ENCODE measurements at regions of chr20 and their contacts with region 1.

Region 1: DNA sequence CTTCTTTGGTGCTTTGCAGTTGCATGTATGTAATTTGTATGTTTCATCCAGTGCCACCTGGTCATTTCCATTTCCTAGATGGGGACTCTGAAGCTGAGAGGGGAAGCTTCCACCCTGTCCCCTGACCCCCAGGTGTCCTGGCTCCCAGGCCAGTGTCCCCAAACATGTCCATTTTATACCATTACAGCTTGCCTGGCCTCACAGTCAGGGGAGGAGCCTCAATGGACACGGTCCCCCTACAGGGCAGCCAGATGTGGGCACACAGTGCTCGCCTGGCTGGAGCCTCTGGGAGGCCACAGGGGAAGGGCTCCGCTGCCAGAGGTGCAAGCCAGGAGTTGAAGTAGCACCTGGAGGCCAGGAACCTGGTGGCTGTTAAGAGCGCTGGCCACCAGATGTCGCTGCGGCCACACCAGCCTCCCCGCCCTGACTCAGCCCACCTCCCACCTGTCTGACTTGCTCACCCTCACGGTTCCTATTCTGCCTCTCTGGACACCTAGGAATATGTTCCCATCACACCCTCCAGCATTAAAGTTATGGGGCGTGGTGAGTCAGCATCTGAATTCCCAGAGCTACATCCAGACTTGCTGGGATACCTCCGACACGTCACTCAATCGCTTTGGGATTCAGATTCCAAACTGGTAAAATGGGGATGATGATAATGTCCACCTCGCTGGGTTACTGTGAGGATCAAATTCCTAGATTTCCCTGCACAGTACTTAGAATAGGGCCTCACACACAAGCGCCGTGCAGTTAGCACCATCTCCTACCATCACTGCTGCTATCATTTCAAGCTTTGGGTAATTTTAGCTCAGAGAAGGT is 107.4 kb downstream of the SULF2 start:
- DNase-seq: peak; percentile 85
- CTCF ChIP-seq: peak; percentile 91

Region 2: GRCh38 chr20:47642624-47643023 is 35.2 kb before region 1 on chr20:
- CTCF ChIA-PET with region 1: no interaction called
- POLR2A ChIA-PET with region 1: no interaction called
- DNase-seq: no peak
- CTCF ChIP-seq: no peak

Region 3: GRCh38 chr20:47663333-47664067 is 14.3 kb before region 1 on chr20:
- CTCF ChIA-PET with region 1: interaction called, 37 read pairs
- POLR2A ChIA-PET with region 1: no interaction called
- DNase-seq: peak; percentile 84
- CTCF ChIP-seq: peak; percentile 97

Region 4: DNA sequence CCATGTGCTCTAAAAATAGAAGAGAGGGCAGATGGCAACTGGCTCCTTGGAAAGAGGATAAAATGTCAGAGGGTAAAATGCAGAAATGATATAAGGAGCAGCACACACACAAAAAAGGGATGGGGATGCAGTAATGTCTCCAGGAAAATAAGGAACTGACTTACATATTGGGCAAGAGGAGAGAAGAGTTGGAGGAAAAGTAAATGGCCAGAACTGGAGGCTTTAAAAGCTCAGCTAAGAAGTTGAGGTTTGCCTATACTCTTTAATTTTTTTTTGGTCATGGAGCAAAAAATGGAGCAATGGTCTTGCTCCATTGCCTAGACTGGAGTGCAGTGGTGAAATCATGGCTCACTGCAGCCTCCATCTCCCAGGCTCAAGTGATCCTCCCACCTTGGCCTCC is 13.8 kb after region 1 on chr20:
- CTCF ChIA-PET with region 1: interaction called, 53 read pairs
- POLR2A ChIA-PET with region 1: no interaction called
- DNase-seq: no peak
- CTCF ChIP-seq: no peak

Region 5: DNA sequence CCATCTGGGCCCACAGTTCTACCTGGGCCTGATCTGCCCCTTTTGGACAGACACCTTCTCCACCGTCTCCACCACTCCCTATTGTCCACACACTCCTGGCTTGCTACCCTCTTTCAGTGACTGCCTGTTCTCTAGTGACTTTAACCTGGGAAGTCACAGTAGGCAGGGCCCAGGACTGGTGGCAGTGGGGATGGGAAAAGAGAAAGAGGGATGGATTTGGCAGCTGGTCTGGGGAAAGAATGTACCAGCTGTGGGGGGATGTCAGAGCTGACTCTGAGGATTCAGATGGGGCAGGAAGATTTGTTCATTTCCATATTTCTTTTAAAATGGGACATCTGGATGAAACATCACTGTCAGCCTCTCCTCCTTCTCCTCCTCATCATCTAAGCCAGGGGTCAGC is 22.0 kb after region 1 on chr20:
- CTCF ChIA-PET with region 1: interaction called, 53 read pairs
- POLR2A ChIA-PET with region 1: no interaction called
- DNase-seq: no peak
- CTCF ChIP-seq: no peak

Region 6: GRCh38 chr20:47713878-47714450 is 36.1 kb after region 1 on chr20:
- CTCF ChIA-PET with region 1: interaction called, 70 read pairs
- POLR2A ChIA-PET with region 1: no interaction called
- DNase-seq: no peak
- CTCF ChIP-seq: no peak

Region 7: DNA sequence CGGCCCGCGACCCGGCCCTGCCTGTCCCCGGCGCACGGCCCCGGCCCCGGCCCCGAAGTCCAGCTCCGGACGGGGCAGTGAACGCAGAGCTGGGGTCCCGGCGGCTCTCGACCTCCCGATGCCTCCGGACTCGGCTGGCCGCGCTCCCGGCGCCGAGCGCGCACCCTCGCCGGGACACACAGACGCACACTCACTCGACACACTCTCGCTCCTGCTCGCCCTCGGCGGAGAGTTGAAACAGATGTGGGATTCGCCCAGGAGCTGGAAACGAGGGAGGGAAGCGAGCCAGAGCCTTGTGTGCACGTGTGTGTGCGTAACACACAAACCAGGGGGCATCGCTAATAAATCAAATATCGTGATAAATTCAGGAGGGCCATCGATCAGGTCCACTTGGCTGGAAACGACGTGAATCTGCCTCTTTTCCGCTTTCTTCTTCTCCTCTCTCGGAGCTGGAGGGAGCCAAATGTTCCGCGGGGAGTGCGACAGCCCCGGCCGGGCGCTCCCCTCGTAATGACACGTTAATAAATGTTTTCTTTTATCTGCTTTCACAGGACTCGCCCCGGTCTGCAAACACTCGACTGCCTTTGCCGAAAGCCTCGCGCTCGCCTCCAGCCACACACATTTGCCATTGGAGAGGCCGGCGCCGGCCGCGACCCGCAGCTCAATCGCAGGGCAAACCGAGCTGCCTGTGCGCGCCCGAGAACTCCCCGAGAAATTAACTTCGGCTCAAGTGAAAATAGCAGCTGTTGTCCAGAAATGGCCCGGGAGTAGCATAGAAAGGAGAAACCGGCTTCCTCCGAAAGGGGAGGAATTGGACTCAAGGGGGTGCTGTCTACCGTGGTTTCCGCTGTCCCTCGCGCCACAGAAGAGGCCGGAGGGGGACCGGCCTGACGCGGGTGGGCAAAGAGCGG is 108.3 kb after region 1 on chr20:
- CTCF ChIA-PET with region 1: interaction called, 10 read pairs
- POLR2A ChIA-PET with region 1: no interaction called
- DNase-seq: peak; percentile 71
- CTCF ChIP-seq: peak; percentile 65

Region 8: GRCh38 chr20:48626226-48626937 is 948.5 kb after region 1 on chr20:
- CTCF ChIA-PET with region 1: interaction called, 92 read pairs
- POLR2A ChIA-PET with region 1: no interaction called
- DNase-seq: no peak
- CTCF ChIP-seq: no peak

Measured in GM10248 (cell line).